Caco-2 (cell line): ENCODE measurements at regions of chr6 and their contacts with region 1.

Region 1: GRCh38 chr6:65776313-65776712 is 69.3 kb upstream of the EYS start:
- DNase-seq: peak; percentile 19 to 36
- H3K4me3 ChIP-seq: no peak overlapping the region
- H3K4me3 Mint-ChIP-seq: no peak overlapping the region
- H3K27ac Mint-ChIP-seq: no peak overlapping the region
- H3K4me1 ChIP-seq: peaks cover 8% of the 10 kb centered on the region; the same call in 1 of the 2 replicates
- H3K4me1 Mint-ChIP-seq: no peaks in the 10 kb centered on the region
- H3K27me3 ChIP-seq: no peaks in the 10 kb centered on the region
- H3K27me3 Mint-ChIP-seq: peaks cover 3% of the 10 kb centered on the region
- CTCF ChIP-seq: peak in 1 of 2 experiments; percentile 36

Region 2: DNA sequence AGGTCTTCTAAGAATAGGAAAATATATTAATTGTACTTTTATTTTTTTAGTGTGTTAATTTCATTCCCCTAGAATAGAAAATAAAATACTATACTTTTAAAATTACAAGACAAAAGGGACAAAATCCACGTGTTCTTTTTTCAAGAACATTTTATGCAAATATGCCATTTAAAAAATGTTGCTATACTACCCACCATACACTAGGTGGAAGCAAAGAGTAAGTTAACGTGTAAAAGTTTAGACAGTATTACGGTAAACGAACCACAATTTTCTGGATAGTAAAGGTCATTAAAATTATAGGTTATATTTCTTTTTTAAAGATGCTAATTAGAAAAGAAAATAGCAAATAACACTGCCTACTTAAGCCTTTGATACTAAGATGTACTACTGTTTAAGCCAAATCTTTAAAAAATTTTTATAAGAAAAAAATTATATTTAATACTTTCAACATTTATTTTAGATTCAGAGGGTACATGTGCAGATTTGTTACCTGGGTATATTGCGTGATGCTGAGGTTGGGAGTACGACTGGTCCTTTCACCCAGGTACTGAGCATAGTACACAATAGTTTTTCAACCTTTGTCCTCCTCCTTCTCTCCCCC is 1853.1 kb before region 1 on chr6:
- CTCF ChIA-PET with region 1: no interaction called
- POLR2A ChIA-PET with region 1: no interaction called
- intact Hi-C with region 1: loop called (anchors 2 kb)
- DNase-seq: peak in 1 of 2 experiments; percentile 6
- H3K4me3 ChIP-seq: no peak overlapping the region
- H3K4me3 Mint-ChIP-seq: no peak overlapping the region
- H3K27ac Mint-ChIP-seq: no peak overlapping the region
- H3K4me1 ChIP-seq: no peaks in the 10 kb centered on the region
- H3K4me1 Mint-ChIP-seq: no peaks in the 10 kb centered on the region
- H3K27me3 ChIP-seq: no peaks in the 10 kb centered on the region
- H3K27me3 Mint-ChIP-seq: peaks cover 8% of the 10 kb centered on the region
- CTCF ChIP-seq: peak in 1 of 2 experiments; percentile 50

Region 3: GRCh38 chr6:65638047-65638842 is 138.1 kb before region 1 on chr6:
- CTCF ChIA-PET with region 1: no interaction called
- POLR2A ChIA-PET with region 1: no interaction called
- intact Hi-C with region 1: loop called (anchors 1 kb)
- DNase-seq: peak; percentile 62 to 66
- H3K4me3 ChIP-seq: no peak overlapping the region
- H3K4me3 Mint-ChIP-seq: no peak overlapping the region
- H3K27ac Mint-ChIP-seq: no peak overlapping the region
- H3K4me1 ChIP-seq: no peaks in the 10 kb centered on the region
- H3K4me1 Mint-ChIP-seq: no peaks in the 10 kb centered on the region
- H3K27me3 ChIP-seq: no peaks in the 10 kb centered on the region
- H3K27me3 Mint-ChIP-seq: no peaks in the 10 kb centered on the region
- CTCF ChIP-seq: peak; percentile 52 to 68

Region 4: GRCh38 chr6:65650086-65650485 is 126.2 kb before region 1 on chr6:
- CTCF ChIA-PET with region 1: no interaction called
- POLR2A ChIA-PET with region 1: no interaction called
- intact Hi-C with region 1: loop called (anchors 5 kb)
- DNase-seq: no peak
- H3K4me3 ChIP-seq: no peak overlapping the region
- H3K4me3 Mint-ChIP-seq: no peak overlapping the region
- H3K27ac Mint-ChIP-seq: no peak overlapping the region
- H3K4me1 ChIP-seq: no peaks in the 10 kb centered on the region
- H3K4me1 Mint-ChIP-seq: no peaks in the 10 kb centered on the region
- H3K27me3 ChIP-seq: no peaks in the 10 kb centered on the region
- H3K27me3 Mint-ChIP-seq: no peaks in the 10 kb centered on the region
- CTCF ChIP-seq: no peak